Naive thymus-derived CD8-positive, alpha-beta T cell (primary cell): ENCODE measurements at regions of chr7 and their contacts with region 1.

Region 1: DNA sequence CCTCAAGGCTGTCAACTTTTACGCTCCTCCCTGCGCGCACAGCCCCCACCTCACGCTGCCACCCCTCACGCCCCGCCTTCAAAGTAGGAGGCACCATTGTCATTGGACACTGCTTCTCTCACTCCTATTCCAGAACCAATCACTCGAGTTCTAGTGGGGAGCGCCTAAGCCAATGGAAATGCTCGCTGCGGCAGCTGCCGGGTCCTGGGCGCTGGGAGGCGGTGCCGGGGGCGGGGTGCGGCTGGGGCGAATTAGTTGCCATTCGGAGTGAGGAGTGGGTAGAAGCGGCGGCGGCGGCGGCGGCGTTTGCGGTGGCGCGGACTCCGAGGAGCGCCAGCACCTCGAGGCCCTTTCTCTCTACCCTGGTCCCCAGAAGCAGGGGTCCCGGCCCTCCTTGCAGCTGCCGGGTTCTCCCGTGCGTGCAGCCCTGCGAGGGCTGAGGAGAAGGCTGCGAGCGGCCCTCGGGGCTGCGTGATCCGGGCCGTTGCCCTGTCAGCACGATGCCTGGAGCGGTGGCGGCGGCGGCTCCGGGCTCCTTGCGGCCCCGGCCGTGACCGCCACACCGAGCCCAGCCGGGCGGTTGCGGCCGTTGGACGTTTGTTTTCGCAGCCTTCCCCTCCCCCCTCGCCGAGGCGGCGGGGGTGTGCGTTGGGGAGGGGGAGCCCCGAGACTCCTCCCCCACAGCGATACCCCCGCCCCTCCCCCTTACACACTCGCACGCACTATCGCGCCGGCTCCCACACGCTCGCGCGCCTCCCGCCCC is at the start of gene GLCCI1:
- DNase-seq: peak; percentile 93 to 97 (median 95)
- ATAC-seq: peak; percentile 88 to 91
- H3K4me3 Mint-ChIP-seq: peak within 1 kb of the TSS in 9 of 10 donors; percentile 86 to 99 (median 97)
- H3K27ac Mint-ChIP-seq: peak within 1 kb of the TSS; percentile 89 to 98 (median 93)
- H3K4me1 Mint-ChIP-seq: peaks cover 11 to 36% (median 34%) of the 10 kb centered on the region in 4 donors
- H3K27me3 Mint-ChIP-seq: no peaks in the 10 kb centered on the region
- polyA plus RNA-seq, gene GLCCI1: 9.0 to 30.8 (median 14.7) TPM

Region 2: DNA sequence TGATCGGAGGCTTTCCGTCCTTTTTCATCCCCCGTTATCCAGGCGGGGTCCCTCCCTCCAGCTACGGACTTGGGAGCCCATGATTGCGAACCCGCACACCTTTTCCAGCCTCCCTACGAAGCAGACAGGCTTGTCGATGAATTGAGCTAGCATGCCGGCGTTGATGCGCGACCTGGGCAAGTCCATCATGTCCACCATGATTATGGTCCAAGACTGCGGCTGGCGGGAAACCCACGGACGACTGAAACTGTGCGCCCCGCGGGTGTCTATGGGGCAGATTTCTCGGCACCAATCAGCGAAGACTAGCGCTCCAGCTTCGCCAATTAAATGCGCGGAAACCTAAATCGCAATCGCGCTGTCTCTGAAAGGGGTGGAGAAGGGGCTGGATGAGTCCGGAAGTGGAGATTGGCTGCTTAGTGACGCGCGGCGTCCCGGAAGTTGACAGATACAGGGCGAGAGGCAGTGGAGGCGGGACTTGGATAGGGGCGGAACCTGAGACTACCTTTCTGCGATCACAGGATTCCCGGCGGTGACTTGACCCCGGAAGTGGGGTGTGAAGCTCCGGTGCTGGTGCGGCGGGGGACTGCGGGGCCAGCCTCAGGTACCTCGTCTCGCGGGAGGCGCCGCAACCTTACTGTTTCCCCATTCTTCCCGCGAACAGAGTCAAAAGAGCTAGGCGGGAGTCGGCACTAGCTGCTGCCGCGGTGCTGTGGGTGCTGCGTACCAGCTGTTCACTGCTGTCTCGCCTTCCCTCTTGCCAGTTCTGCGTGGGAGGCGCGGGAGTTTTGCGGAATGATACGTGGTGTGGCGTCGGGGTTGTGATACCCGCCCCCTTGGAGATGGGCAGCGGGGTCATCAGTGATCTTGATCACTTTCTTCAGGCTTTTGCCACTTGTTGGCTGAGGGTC is 328.2 kb before region 1 on chr7 and contains the start of gene UMAD1:
- POLR2A ChIA-PET with region 1: interaction called, 35 read pairs
- DNase-seq: peak; percentile 87 to 99 (median 99)
- ATAC-seq: peak; percentile 87 to 88
- H3K4me3 Mint-ChIP-seq: peak within 1 kb of the TSS; percentile 90 to 99 (median 97)
- H3K27ac Mint-ChIP-seq: peak within 1 kb of the TSS; percentile 94 to 100 (median 98)
- H3K4me1 Mint-ChIP-seq: peaks cover 16 to 55% (median 50%) of the 10 kb centered on the region in 4 donors
- H3K27me3 Mint-ChIP-seq: no peaks in the 10 kb centered on the region
- polyA plus RNA-seq, gene UMAD1: 25.9 to 35.5 (median 27.4) TPM

Region 3: DNA sequence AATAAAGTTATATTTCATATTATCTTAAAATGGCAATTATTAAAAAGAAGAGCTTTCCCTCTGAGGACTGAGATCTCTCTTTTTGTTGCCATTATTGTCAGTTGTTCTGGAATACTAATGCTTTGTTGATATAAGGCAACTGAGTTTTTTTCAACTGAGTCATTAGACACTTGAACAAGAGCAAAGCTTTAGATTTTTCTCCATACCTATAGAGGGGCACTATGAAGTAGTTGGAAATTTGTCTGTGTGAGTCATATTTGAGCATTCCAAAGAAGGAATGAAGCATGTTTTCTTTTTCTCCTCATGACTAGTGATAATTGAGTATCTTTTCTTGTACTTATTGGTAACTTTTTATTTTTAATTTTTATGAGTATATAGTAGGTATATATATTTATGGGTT is 274.8 kb before region 1 on chr7:
- POLR2A ChIA-PET with region 1: no interaction called
- DNase-seq: no peak
- ATAC-seq: no peak
- H3K4me3 Mint-ChIP-seq: no peak overlapping the region
- H3K27ac Mint-ChIP-seq: no peak overlapping the region
- H3K4me1 Mint-ChIP-seq: peaks cover 8 to 27% (median 16%) of the 10 kb centered on the region in 4 donors
- H3K27me3 Mint-ChIP-seq: no peaks in the 10 kb centered on the region

Region 4: DNA sequence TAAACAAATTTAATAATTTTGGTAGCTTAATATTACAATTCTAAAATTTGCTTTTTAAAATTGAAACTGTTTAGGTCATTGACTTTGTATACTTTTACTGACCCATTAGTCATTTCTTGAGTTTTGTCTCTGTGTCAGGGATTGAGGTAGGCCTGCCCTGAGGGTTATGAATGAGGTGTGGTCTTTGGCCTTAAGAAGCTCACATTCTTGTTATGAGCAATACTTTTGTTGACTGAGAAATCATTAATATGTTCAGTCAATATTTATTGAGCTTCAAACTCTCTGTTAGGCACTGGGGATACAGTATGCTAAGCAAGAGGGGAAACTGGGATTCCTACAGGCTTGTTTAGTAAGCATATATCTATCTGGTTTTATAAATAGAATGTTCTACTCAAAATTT is 203.3 kb before region 1 on chr7:
- POLR2A ChIA-PET with region 1: interaction called, 24 read pairs
- DNase-seq: no peak
- ATAC-seq: no peak
- H3K4me3 Mint-ChIP-seq: no peak overlapping the region
- H3K27ac Mint-ChIP-seq: peak overlapping the region in 9 of 10 donors; percentile 38 to 93 (median 63)
- H3K4me1 Mint-ChIP-seq: peaks cover 27 to 49% (median 42%) of the 10 kb centered on the region in 4 donors
- H3K27me3 Mint-ChIP-seq: no peaks in the 10 kb centered on the region

Region 5: GRCh38 chr7:7884855-7885254 is 83.9 kb before region 1 on chr7:
- POLR2A ChIA-PET with region 1: no interaction called
- DNase-seq: no peak
- ATAC-seq: no peak
- H3K4me3 Mint-ChIP-seq: no peak overlapping the region
- H3K27ac Mint-ChIP-seq: no peak overlapping the region
- H3K4me1 Mint-ChIP-seq: peaks cover 0 to 8% (median 0%) of the 10 kb centered on the region in 4 donors
- H3K27me3 Mint-ChIP-seq: no peaks in the 10 kb centered on the region

Region 6: GRCh38 chr7:7989133-7989984 is 20.6 kb after region 1 on chr7:
- POLR2A ChIA-PET with region 1: interaction called, 14 read pairs
- DNase-seq: no peak
- ATAC-seq: peak; percentile 45 to 49
- H3K4me3 Mint-ChIP-seq: peak overlapping the region; percentile 52 to 86 (median 80)
- H3K27ac Mint-ChIP-seq: peak overlapping the region; percentile 1 to 86 (median 66)
- H3K4me1 Mint-ChIP-seq: peaks cover 24 to 62% (median 55%) of the 10 kb centered on the region in 4 donors
- H3K27me3 Mint-ChIP-seq: no peaks in the 10 kb centered on the region

Region 7: DNA sequence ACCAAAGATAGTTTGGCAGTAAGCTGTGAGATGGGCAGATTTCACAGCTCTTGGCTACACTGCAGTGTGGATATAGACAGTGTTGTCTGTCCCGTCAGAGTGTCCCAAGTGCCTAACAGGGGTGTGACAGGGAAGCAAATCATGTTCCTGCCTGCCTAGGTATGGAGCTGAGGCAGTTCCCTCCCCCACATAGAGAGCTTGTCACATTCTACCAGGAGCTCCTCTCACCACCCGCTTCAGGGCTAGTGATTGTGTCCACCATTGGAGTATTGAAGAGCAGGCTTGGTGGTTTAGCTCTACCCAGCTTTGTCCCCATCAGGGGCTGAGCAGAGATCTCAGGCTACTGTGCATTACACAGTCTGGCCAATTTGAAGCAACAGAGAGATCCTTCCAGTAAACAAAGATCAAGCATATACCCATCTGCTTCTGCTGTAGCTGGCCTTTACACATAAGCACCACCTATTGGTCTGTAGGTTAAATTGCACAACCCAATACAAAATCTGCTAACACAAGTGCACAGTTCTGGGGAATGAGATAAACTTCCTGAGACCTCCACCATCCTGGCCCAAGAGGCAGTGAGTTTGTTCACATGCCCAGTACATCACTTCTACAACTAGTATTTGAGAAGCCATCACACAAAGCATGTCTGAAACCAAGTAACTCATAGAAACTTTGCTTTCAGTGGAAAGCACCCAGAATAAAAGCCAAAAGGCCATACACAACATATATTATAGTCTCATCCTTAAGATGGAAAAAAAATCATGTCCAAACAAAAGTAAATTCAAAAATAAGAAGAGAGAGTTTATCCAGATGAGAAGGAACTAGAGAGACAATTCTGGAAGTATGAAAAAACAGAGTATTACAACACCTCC is 67.2 kb after region 1 on chr7:
- POLR2A ChIA-PET with region 1: interaction called, 10 read pairs
- DNase-seq: peak in 3 of 10 donors; percentile 28 to 45 (median 43)
- ATAC-seq: peak; percentile 81 to 89
- H3K4me3 Mint-ChIP-seq: no peak overlapping the region
- H3K27ac Mint-ChIP-seq: peak overlapping the region in 9 of 10 donors; percentile 26 to 82 (median 60)
- H3K4me1 Mint-ChIP-seq: peaks cover 7 to 21% (median 14%) of the 10 kb centered on the region in 4 donors
- H3K27me3 Mint-ChIP-seq: no peaks in the 10 kb centered on the region

Region 8: DNA sequence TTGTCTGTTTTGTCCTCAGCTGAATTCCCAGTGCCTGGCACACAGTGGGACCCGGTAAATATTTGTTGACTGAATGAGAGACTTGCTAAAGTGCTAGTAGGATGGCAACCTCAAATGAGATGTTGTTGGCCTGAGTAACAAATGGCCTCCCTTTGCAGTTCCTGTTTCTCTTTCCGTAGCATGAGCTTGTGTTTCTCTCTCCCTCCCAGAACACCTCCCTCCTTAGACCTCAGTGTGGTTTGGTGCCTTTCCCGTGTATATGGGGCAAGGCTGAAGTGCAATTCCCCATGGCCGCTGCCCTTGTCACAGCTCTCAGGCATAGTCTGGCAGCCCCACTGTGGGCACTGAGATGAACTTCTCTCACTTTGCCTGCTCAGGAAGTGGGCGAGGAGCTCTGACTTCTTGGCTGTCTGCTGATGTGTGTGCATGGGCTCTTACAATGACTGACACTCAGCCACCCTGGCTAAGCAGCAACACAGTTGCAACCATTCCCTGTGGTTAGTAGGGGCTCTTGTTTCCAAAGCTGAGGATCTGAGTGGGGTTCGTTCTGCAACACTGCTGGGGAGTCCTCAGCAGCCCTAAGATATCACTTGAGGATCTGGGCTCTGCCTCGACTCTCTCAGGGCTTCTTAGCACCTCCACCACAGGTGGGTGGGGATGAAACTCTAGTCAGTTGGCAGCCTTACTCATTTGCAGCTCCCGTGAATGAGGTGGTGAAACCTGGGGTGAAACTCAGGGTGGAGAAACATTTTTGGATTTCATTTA is 157.1 kb after region 1 on chr7:
- POLR2A ChIA-PET with region 1: interaction called, 39 read pairs
- DNase-seq: peak; percentile 36 to 88 (median 77)
- ATAC-seq: peak; percentile 97
- H3K4me3 Mint-ChIP-seq: peak overlapping the region; percentile 41 to 83 (median 76)
- H3K27ac Mint-ChIP-seq: peak overlapping the region; percentile 94 to 100 (median 98)
- H3K4me1 Mint-ChIP-seq: peaks cover 34 to 82% (median 72%) of the 10 kb centered on the region in 4 donors
- H3K27me3 Mint-ChIP-seq: no peaks in the 10 kb centered on the region

Region 9: GRCh38 chr7:8413600-8413999 is 444.9 kb after region 1 on chr7:
- POLR2A ChIA-PET with region 1: no interaction called
- DNase-seq: no peak
- ATAC-seq: no peak
- H3K4me3 Mint-ChIP-seq: no peak overlapping the region
- H3K27ac Mint-ChIP-seq: no peak overlapping the region
- H3K4me1 Mint-ChIP-seq: no peaks in the 10 kb centered on the region
- H3K27me3 Mint-ChIP-seq: peaks cover 5 to 50% (median 19%) of the 10 kb centered on the region in 5 donors